Heart left ventricle (tissue), 16 donors: ENCODE measurements at regions of chr4 and their contacts with region 1.

Region 1: GRCh38 chr4:128310266-128310697 is 22.7 kb upstream of the PGRMC2 start:
- DNase-seq: peak in 4 of 5 donors; percentile 22 to 42 (median 30)
- ATAC-seq: peak; percentile 76 to 89 (median 86)
- H3K4me3 ChIP-seq: no peak overlapping the region
- H3K27ac ChIP-seq: peak overlapping the region in 2 of 12 donors; percentile 32 to 64
- H3K4me1 ChIP-seq: peaks cover 0 to 34% (median 9%) of the 10 kb centered on the region in 12 donors
- H3K27me3 ChIP-seq: no peaks in the 10 kb centered on the region
- CTCF ChIP-seq: peak in 11 of 12 donors; percentile 8 to 58 (median 36)
- POLR2A ChIP-seq: no peak

Region 2: GRCh38 chr4:128204901-128205300 is 105.4 kb before region 1 on chr4:
- intact Hi-C with region 1: no loop called
- DNase-seq: no peak
- ATAC-seq: no peak
- H3K4me3 ChIP-seq: no peak overlapping the region
- H3K27ac ChIP-seq: no peak overlapping the region
- H3K4me1 ChIP-seq: no peaks in the 10 kb centered on the region
- H3K27me3 ChIP-seq: no peaks in the 10 kb centered on the region
- CTCF ChIP-seq: no peak
- POLR2A ChIP-seq: no peak

Region 3: GRCh38 chr4:128354205-128354821 is 44.0 kb after region 1 on chr4:
- intact Hi-C with region 1: loop called in 1 of 10 experiments (anchors 5 kb)
- DNase-seq: peak in 3 of 5 donors; percentile 24 to 72 (median 37)
- ATAC-seq: peak in 2 of 4 donors; percentile 11 to 28
- H3K4me3 ChIP-seq: no peak overlapping the region
- H3K27ac ChIP-seq: peak overlapping the region in 6 of 12 donors; percentile 5 to 55 (median 52)
- H3K4me1 ChIP-seq: peaks cover 0 to 44% (median 23%) of the 10 kb centered on the region in 12 donors
- H3K27me3 ChIP-seq: no peaks in the 10 kb centered on the region
- CTCF ChIP-seq: no peak
- POLR2A ChIP-seq: no peak

Region 4: GRCh38 chr4:128468123-128468989 is 158.1 kb after region 1 on chr4:
- intact Hi-C with region 1: no loop called
- DNase-seq: peak in 4 of 5 donors; percentile 36 to 51 (median 44)
- ATAC-seq: peak; percentile 70 to 86 (median 81)
- H3K4me3 ChIP-seq: peak overlapping the region in 2 of 12 donors; percentile 14 to 16
- H3K27ac ChIP-seq: peak overlapping the region in 10 of 12 donors; percentile 6 to 71 (median 24)
- H3K4me1 ChIP-seq: peaks cover 0 to 30% (median 9%) of the 10 kb centered on the region in 12 donors
- H3K27me3 ChIP-seq: no peaks in the 10 kb centered on the region
- CTCF ChIP-seq: no peak
- POLR2A ChIP-seq: no peak